Caco-2 (cell line): ENCODE measurements at regions of chr15 and their contacts with region 1.

Region 1: DNA sequence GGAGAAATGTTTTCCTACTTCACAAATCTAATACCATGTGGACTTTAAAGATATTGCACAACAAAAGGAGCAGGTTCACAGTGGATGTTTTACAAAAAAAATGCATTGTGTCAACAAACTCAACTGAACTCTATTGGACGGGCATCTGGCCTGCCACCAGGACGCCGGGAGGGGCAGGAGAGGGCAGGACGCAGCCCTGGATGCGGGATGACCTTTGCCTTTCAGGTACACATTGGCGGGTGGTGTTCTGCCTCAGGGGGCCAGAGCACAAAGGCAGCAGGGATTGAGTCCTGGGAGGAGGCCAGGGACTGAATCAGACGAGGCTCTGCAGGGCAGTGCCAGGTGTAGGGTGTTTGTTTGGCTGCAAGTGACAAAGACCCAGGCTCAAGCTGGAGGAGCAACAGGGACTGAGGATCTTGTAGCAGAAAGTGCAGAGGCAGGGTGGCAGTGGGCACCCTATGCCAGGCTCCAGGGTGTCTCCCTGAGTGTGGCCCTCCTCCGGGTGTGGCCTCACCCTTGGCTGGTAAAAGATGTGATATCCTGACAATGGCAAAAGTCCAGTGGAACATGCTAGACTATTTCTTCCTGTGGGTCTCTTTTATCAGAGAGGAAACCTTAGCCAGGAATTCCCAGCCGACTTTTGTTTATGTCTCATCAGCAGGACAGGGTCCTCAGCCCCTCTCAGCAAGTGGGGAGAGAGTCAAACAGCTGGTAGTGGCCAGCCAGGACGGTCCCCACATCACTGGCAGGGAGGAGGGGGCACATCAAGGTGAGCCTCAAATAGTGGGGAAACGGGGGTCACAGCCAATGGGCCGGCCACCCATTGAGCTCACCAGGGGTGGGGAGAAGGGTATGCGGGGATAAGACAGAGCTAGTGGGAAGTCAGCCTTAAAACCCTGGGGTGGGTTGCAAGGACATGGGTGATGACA is 29.7 kb upstream of the KLF13 start:
- DNase-seq: peak; percentile 92 to 95
- H3K4me3 ChIP-seq: no peak overlapping the region
- H3K4me3 Mint-ChIP-seq: peak overlapping the region; percentile 67
- H3K27ac Mint-ChIP-seq: peak overlapping the region; percentile 91
- H3K4me1 ChIP-seq: peaks cover 31% of the 10 kb centered on the region
- H3K4me1 Mint-ChIP-seq: peaks cover 23% of the 10 kb centered on the region
- H3K27me3 ChIP-seq: no peaks in the 10 kb centered on the region
- H3K27me3 Mint-ChIP-seq: peaks cover under 1% of the 10 kb centered on the region
- CTCF ChIP-seq: peak in 1 of 2 experiments; percentile 38

Region 2: GRCh38 chr15:30824518-30825165 is 472.3 kb before region 1 on chr15:
- CTCF ChIA-PET with region 1: no interaction called
- POLR2A ChIA-PET with region 1: no interaction called
- intact Hi-C with region 1: no loop called
- DNase-seq: no peak
- H3K4me3 ChIP-seq: no peak overlapping the region
- H3K4me3 Mint-ChIP-seq: no peak overlapping the region
- H3K27ac Mint-ChIP-seq: no peak overlapping the region
- H3K4me1 ChIP-seq: no peaks in the 10 kb centered on the region
- H3K4me1 Mint-ChIP-seq: no peaks in the 10 kb centered on the region
- H3K27me3 ChIP-seq: no peaks in the 10 kb centered on the region; the same call in 1 of the 2 replicates
- H3K27me3 Mint-ChIP-seq: peaks cover 2% of the 10 kb centered on the region
- CTCF ChIP-seq: no peak

Region 3: DNA sequence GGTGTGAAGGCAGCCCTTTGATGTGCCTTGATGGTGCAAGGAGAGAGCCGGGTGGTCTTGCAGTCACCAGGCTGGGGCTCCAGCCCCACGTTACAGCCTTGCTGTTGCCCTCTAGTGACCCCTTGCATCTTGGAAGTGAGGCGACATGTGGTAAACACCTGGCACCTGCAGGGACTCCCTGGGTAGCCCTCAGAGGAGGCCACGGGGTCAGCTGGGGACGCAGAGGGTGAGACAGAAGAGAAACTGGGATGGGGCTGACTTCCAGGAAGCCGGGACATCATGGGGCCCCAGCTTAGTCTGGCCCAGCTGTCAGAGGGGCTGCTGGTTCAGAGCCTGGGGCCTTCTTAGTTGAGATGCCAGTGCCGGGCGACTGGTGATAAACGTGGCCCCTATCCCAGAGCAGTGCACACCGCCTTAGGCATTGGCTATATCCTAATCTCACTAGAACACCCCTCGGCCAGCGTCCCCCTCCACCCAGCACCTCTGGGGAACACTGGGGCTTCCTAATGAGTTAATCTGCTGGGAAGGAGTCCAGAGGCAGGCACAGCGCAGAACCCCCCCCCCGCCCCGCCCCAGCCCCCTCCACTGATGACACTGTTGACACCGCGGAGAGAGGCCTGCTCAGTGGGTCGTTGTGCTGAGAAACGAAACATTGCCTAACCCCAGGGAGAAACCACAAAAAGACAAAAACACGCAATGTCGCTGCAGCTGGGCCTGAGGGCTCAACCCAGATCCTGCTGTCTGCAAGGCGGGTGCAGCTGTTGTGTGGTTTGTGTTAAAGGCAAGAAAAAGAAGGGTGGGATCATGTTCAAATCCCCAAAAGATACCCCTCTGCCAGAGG is 30.8 kb before region 1 on chr15:
- CTCF ChIA-PET with region 1: no interaction called
- POLR2A ChIA-PET with region 1: no interaction called
- intact Hi-C with region 1: loop called (anchors 1 kb)
- DNase-seq: peak in 1 of 2 experiments; percentile 33
- H3K4me3 ChIP-seq: no peak overlapping the region
- H3K4me3 Mint-ChIP-seq: no peak overlapping the region
- H3K27ac Mint-ChIP-seq: peak overlapping the region; percentile 65
- H3K4me1 ChIP-seq: peaks cover 12% of the 10 kb centered on the region
- H3K4me1 Mint-ChIP-seq: peaks cover 8% of the 10 kb centered on the region
- H3K27me3 ChIP-seq: no peaks in the 10 kb centered on the region
- H3K27me3 Mint-ChIP-seq: no peaks in the 10 kb centered on the region
- CTCF ChIP-seq: no peak

Region 4: GRCh38 chr15:31440754-31441311 is 143.9 kb after region 1 on chr15:
- CTCF ChIA-PET with region 1: interaction called, 10 read pairs
- POLR2A ChIA-PET with region 1: no interaction called
- intact Hi-C with region 1: no loop called
- DNase-seq: peak in 1 of 2 experiments; percentile 27
- H3K4me3 ChIP-seq: peak overlapping the region; percentile 45
- H3K4me3 Mint-ChIP-seq: peak overlapping the region; percentile 61
- H3K27ac Mint-ChIP-seq: no peak overlapping the region
- H3K4me1 ChIP-seq: no peaks in the 10 kb centered on the region
- H3K4me1 Mint-ChIP-seq: peaks cover 9% of the 10 kb centered on the region
- H3K27me3 ChIP-seq: no peaks in the 10 kb centered on the region
- H3K27me3 Mint-ChIP-seq: no peaks in the 10 kb centered on the region
- CTCF ChIP-seq: no peak

Region 5: GRCh38 chr15:31660816-31661215 is 363.9 kb after region 1 on chr15:
- CTCF ChIA-PET with region 1: no interaction called
- POLR2A ChIA-PET with region 1: no interaction called
- intact Hi-C with region 1: no loop called
- DNase-seq: no peak
- H3K4me3 ChIP-seq: no peak overlapping the region
- H3K4me3 Mint-ChIP-seq: no peak overlapping the region
- H3K27ac Mint-ChIP-seq: no peak overlapping the region
- H3K4me1 ChIP-seq: no peaks in the 10 kb centered on the region
- H3K4me1 Mint-ChIP-seq: no peaks in the 10 kb centered on the region
- H3K27me3 ChIP-seq: no peaks in the 10 kb centered on the region; the same call in 1 of the 2 replicates
- H3K27me3 Mint-ChIP-seq: no peaks in the 10 kb centered on the region
- CTCF ChIP-seq: no peak